ENCODE measurements at regions of chr17 and their contacts with region 1.

Region 1: DNA sequence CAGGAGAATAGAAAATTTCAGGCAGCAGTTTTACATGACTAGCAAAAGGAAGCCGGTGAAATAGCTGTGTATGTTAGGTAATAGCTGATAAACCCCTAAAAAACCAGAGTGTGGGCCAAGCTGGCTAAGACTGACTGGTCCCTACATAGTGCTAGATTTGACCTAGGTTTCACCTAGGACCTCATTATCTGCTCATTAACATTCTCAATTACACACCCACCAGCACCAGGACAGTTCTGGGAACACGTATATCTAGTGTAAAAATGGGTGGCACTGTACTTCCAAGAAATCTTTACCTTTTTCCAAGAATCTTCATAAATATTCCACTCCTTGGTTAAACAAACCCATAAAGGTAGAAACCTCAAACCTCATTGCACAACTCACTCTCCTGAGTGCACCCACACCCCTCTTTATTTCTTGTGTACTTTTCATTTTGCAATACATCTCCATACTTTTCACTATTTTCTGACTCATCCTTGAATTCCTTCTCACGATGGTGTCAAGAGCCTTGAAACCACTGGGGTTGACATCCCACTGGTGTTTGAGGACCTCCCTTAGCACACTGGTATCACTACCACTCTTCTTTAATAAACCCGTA is 262.7 kb upstream of the KCNJ16 start:
- DNase-seq: peak; percentile 78
- H3K4me3 ChIP-seq: no peak overlapping the region
- H3K27ac ChIP-seq: peak overlapping the region; percentile 32
- H3K4me1 ChIP-seq: peaks cover 30% of the 10 kb centered on the region
- H3K27me3 ChIP-seq: no peaks in the 10 kb centered on the region
- CTCF ChIP-seq: no peak

Region 2: GRCh38 chr17:69828087-69828486 is 15.7 kb after region 1 on chr17:
- CTCF ChIA-PET with region 1: interaction called, 10 read pairs
- dilution Hi-C with region 1: no loop called
- in situ Hi-C with region 1: no loop called
- intact Hi-C with region 1: no loop called
- DNase-seq: peak; percentile 44
- H3K4me3 ChIP-seq: no peak overlapping the region
- H3K27ac ChIP-seq: no peak overlapping the region
- H3K4me1 ChIP-seq: peaks cover 7% of the 10 kb centered on the region
- H3K27me3 ChIP-seq: no peaks in the 10 kb centered on the region
- CTCF ChIP-seq: no peak

Region 3: GRCh38 chr17:69900829-69901228 is 88.5 kb after region 1 on chr17:
- CTCF ChIA-PET with region 1: no interaction called
- dilution Hi-C with region 1: loop called (anchors 5 kb)
- in situ Hi-C with region 1: no loop called
- intact Hi-C with region 1: no loop called
- DNase-seq: no peak
- H3K4me3 ChIP-seq: no peak overlapping the region
- H3K27ac ChIP-seq: no peak overlapping the region
- H3K4me1 ChIP-seq: peaks cover 4% of the 10 kb centered on the region
- H3K27me3 ChIP-seq: no peaks in the 10 kb centered on the region
- CTCF ChIP-seq: no peak